Activated CD4-positive, alpha-beta T cell treated with anti-CD3 and anti-CD28 coated beads, Interleukin-2, amount 10 ng/mL, durations not matched to agents 24 days and 14 days (primary cell): ENCODE measurements at regions of chr20 and their contacts with region 1.

Region 1: DNA sequence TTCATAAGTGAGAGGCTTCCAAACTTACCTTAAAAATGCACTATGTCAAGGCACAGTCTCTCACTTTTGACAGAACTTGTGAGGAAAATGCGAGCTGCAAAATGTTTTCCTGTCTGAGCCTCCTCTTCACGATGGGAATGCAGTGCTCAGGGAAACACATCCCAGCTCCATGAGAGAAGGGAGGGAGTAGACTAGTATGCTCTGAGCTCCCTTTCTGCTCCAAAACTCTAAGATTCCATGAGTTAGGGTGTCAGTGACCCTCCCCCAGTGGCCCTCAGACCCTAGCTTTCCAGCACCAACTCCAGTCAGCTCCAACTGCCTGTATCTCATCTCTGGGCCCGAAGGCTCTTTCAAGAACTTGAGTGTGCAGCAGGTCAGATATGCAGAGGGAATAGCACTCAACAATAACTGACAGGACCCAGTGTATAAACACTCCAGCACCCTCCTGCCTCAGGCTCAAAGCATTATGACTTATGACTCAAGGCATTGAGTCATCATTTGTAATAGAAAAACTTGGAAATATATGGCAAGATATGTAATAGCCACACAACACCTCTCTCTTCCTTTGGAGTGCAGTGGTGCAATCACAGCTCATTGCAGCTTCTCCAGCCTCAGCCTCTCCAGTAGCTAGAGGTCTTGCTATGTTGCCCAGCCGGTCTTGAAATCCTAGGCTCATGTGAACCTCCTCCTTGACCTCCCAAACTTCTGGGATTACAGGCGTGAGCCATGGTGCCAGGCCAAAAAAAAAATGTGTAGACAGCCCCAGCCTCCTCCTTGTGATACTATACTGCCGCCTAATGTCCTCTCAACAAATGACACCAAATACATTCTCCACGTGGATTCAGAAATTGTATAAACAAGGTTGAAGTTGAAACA is 16.7 kb upstream of the ENTPD6 start:
- DNase-seq: peak; percentile 77
- H3K4me3 Mint-ChIP-seq: no peak overlapping the region
- H3K27ac Mint-ChIP-seq: no peak overlapping the region
- H3K4me1 Mint-ChIP-seq: peaks cover 2% of the 10 kb centered on the region
- H3K27me3 Mint-ChIP-seq: peaks cover 20% of the 10 kb centered on the region

Region 2: GRCh38 chr20:25065625-25066338 is 113.0 kb before region 1 on chr20:
- intact Hi-C with region 1: loop called (anchors 1 kb)
- DNase-seq: peak; percentile 89
- H3K4me3 Mint-ChIP-seq: no peak overlapping the region
- H3K27ac Mint-ChIP-seq: no peak overlapping the region
- H3K4me1 Mint-ChIP-seq: peaks cover 3% of the 10 kb centered on the region
- H3K27me3 Mint-ChIP-seq: peaks cover 50% of the 10 kb centered on the region

Region 3: GRCh38 chr20:25081065-25081729 is 97.6 kb before region 1 on chr20:
- intact Hi-C with region 1: loop called (anchors 2 kb)
- DNase-seq: peak; percentile 79
- H3K4me3 Mint-ChIP-seq: no peak overlapping the region
- H3K27ac Mint-ChIP-seq: no peak overlapping the region
- H3K4me1 Mint-ChIP-seq: peaks cover 9% of the 10 kb centered on the region
- H3K27me3 Mint-ChIP-seq: peaks cover 85% of the 10 kb centered on the region